Activated B cell treated with CpG ODN at 0.5 μM for 24 hours (primary cell): ENCODE measurements at regions of chr4 and their contacts with region 1.

Region 1: GRCh38 chr4:146342600-146343192 is 128.4 kb downstream of the REELD1 start:
- DNase-seq: no peak
- ATAC-seq: no peak
- H3K4me3 Mint-ChIP-seq: no peak overlapping the region
- H3K27ac Mint-ChIP-seq: no peak overlapping the region
- H3K4me1 Mint-ChIP-seq: peaks cover 5% of the 10 kb centered on the region
- H3K27me3 Mint-ChIP-seq: no peaks in the 10 kb centered on the region
- CTCF ChIP-seq: no peak

Region 2: GRCh38 chr4:145956288-145956890 is 386.3 kb before region 1 on chr4:
- CTCF ChIA-PET with region 1: no interaction called
- POLR2A ChIA-PET with region 1: no interaction called
- intact Hi-C with region 1: loop called (anchors 5 kb)
- DNase-seq: no peak
- ATAC-seq: peak; percentile 77
- H3K4me3 Mint-ChIP-seq: no peak overlapping the region
- H3K27ac Mint-ChIP-seq: no peak overlapping the region
- H3K4me1 Mint-ChIP-seq: peaks cover 6% of the 10 kb centered on the region
- H3K27me3 Mint-ChIP-seq: no peaks in the 10 kb centered on the region
- CTCF ChIP-seq: peak; percentile 87

Region 3: DNA sequence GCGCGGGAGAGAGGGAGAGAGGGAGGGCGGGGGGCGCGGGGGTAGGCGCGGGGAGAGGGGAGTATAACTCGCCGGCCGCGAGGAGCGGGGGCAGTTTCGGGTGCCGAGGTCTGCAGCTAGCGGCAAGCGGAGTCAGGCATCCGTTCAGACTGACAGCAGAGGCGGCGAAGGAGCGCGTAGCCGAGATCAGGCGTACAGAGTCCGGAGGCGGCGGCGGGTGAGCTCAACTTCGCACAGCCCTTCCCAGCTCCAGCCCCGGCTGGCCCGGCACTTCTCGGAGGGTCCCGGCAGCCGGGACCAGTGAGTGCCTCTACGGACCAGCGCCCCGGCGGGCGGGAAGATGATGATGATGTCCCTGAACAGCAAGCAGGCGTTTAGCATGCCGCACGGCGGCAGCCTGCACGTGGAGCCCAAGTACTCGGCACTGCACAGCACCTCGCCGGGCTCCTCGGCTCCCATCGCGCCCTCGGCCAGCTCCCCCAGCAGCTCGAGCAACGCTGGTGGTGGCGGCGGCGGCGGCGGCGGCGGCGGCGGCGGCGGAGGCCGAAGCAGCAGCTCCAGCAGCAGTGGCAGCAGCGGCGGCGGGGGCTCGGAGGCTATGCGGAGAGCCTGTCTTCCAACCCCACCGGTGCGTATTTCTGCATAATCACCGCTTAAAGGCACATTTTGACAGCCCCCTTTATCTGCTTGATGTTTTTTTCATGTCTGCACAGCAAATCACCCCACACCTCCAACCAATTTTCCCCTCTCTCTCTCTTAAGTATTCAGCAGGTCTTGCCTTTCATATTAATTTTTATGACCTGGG is 296.3 kb after region 1 on chr4 and contains the start of gene POU4F2:
- CTCF ChIA-PET with region 1: no interaction called
- POLR2A ChIA-PET with region 1: no interaction called
- intact Hi-C with region 1: loop called (anchors 5 kb)
- DNase-seq: no peak
- ATAC-seq: no peak
- H3K4me3 Mint-ChIP-seq: peak within 1 kb of the TSS; percentile 17
- H3K27ac Mint-ChIP-seq: no peak within 1 kb of the TSS
- H3K4me1 Mint-ChIP-seq: peaks cover 13% of the 10 kb centered on the region
- H3K27me3 Mint-ChIP-seq: peaks cover 74% of the 10 kb centered on the region
- CTCF ChIP-seq: no peak
- total RNA-seq, gene POU4F2: not detected in 2 replicates

Region 4: GRCh38 chr4:147019061-147019460 is 676.4 kb after region 1 on chr4:
- CTCF ChIA-PET with region 1: interaction called, 3 read pairs
- POLR2A ChIA-PET with region 1: no interaction called
- intact Hi-C with region 1: loop called (anchors 2 kb)
- DNase-seq: peak; percentile 23
- ATAC-seq: no peak
- H3K4me3 Mint-ChIP-seq: no peak overlapping the region
- H3K27ac Mint-ChIP-seq: no peak overlapping the region
- H3K4me1 Mint-ChIP-seq: no peaks in the 10 kb centered on the region
- H3K27me3 Mint-ChIP-seq: peaks cover 2% of the 10 kb centered on the region
- CTCF ChIP-seq: no peak

Region 5: GRCh38 chr4:147590249-147590920 is 1247.7 kb after region 1 on chr4:
- CTCF ChIA-PET with region 1: no interaction called
- POLR2A ChIA-PET with region 1: no interaction called
- intact Hi-C with region 1: loop called (anchors 5 kb)
- DNase-seq: no peak
- ATAC-seq: no peak
- H3K4me3 Mint-ChIP-seq: no peak overlapping the region
- H3K27ac Mint-ChIP-seq: no peak overlapping the region
- H3K4me1 Mint-ChIP-seq: no peaks in the 10 kb centered on the region
- H3K27me3 Mint-ChIP-seq: peaks cover 18% of the 10 kb centered on the region
- CTCF ChIP-seq: no peak